A673 (cell line): ENCODE measurements at regions of chr4 and their contacts with region 1.

Region 1: DNA sequence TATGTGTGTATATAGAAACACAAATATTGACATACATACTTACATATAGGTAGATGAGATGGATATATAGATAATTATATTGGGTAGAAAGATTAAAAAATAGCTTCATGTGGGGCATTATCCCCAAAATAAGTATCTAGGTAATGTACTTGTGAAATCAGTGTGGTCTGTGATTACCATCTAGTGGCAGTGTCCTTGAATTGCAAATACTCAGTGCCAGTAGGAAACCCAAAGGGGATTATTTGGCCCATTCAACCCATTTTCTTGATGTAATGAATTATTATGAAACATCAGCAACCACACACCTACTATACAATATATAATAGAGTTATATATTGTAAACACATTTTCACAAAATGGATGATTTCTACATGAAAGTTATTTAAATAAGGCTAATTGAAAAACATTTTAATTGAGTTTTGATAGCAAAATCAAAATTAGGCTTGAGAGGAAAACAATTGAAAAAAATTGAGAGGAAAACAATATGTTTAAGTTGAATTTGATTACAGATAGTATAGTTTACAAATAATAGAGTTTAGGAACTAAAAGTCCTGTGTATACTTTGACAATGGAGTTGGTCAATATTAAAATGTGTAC is 389.4 kb downstream of the GALNTL6 start:
- DNase-seq: peak; percentile 39
- H3K4me3 ChIP-seq: no peak overlapping the region
- H3K27ac ChIP-seq: no peak overlapping the region
- H3K4me1 ChIP-seq: no peaks in the 10 kb centered on the region
- H3K27me3 ChIP-seq: no peaks in the 10 kb centered on the region
- CTCF ChIP-seq: peak; percentile 76

Region 2: GRCh38 chr4:170990989-170991589 is 1211.5 kb before region 1 on chr4:
- CTCF ChIA-PET with region 1: no interaction called
- POLR2A ChIA-PET with region 1: no interaction called
- intact Hi-C with region 1: loop called (anchors 10 kb)
- DNase-seq: peak; percentile 50
- H3K4me3 ChIP-seq: no peak overlapping the region
- H3K27ac ChIP-seq: no peak overlapping the region
- H3K4me1 ChIP-seq: no peaks in the 10 kb centered on the region
- H3K27me3 ChIP-seq: no peaks in the 10 kb centered on the region
- CTCF ChIP-seq: peak; percentile 59

Region 3: GRCh38 chr4:171565130-171565788 is 637.3 kb before region 1 on chr4:
- CTCF ChIA-PET with region 1: no interaction called
- POLR2A ChIA-PET with region 1: no interaction called
- intact Hi-C with region 1: no loop called
- DNase-seq: no peak
- H3K4me3 ChIP-seq: no peak overlapping the region
- H3K27ac ChIP-seq: no peak overlapping the region
- H3K4me1 ChIP-seq: no peaks in the 10 kb centered on the region
- H3K27me3 ChIP-seq: no peaks in the 10 kb centered on the region
- CTCF ChIP-seq: no peak

Region 4: GRCh38 chr4:172666711-172667368 is 464.3 kb after region 1 on chr4:
- CTCF ChIA-PET with region 1: no interaction called
- POLR2A ChIA-PET with region 1: no interaction called
- intact Hi-C with region 1: loop called (anchors 10 kb)
- DNase-seq: peak; percentile 72
- H3K4me3 ChIP-seq: no peak overlapping the region
- H3K27ac ChIP-seq: no peak overlapping the region
- H3K4me1 ChIP-seq: no peaks in the 10 kb centered on the region
- H3K27me3 ChIP-seq: peaks cover 4% of the 10 kb centered on the region
- CTCF ChIP-seq: peak; percentile 70

Region 5: DNA sequence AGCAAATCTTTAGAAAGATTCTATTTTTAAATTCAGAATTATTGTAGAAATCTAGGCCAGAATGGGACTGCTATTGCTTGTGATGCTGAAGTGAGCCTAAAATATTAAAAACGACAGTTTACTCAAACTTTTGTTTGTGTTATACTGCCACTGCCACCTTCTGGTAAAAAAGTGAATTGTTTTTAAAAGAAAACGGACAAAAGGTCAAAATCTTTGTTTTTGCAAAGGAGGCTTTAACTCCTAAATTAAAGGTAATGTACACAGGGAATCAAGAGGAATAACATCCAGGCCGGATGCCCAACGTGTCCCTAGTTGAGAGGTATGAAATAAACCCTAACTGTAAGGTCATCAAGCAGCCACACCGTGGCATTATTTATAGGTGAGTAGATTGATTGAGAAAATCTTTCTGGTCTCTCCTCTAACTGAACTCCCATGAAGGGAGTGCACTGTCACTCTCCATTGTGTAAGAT is 627.8 kb after region 1 on chr4:
- CTCF ChIA-PET with region 1: no interaction called
- POLR2A ChIA-PET with region 1: no interaction called
- intact Hi-C with region 1: loop called (anchors 5 kb)
- DNase-seq: peak; percentile 55
- H3K4me3 ChIP-seq: no peak overlapping the region
- H3K27ac ChIP-seq: no peak overlapping the region
- H3K4me1 ChIP-seq: no peaks in the 10 kb centered on the region
- H3K27me3 ChIP-seq: no peaks in the 10 kb centered on the region
- CTCF ChIP-seq: peak; percentile 60